K562 (cell line): ENCODE measurements at regions of chr12 and their contacts with region 1.

Region 1: GRCh38 chr12:23504043-23504442 is 445.4 kb downstream of the SOX5 start:
- DNase-seq: peak; percentile 27 to 63 (median 38)
- ATAC-seq: peak; percentile 93
- H3K4me3 ChIP-seq: no peak overlapping the region
- H3K27ac ChIP-seq: no peak overlapping the region
- H3K4me1 ChIP-seq: peaks cover 0 to 13% of the 10 kb centered on the region in 2 experiments; a peak in 3 of 5 replicates
- H3K27me3 ChIP-seq: no peaks in the 10 kb centered on the region
- CTCF ChIP-seq: peak; percentile 41 to 58 (median 48)
- EP300 ChIP-seq: no peak
- POLR2A ChIP-seq: no peak
- RAD21 ChIP-seq: peak; percentile 20 to 70; a peak in 2 of 4 replicates

Region 2: GRCh38 chr12:23204933-23205778 is 298.9 kb before region 1 on chr12:
- CTCF ChIA-PET with region 1: no interaction called
- POLR2A ChIA-PET with region 1: no interaction called
- in situ Hi-C with region 1: no loop called
- intact Hi-C with region 1: loop called (anchors 10 kb)
- DNase-seq: peak; percentile 56 to 68 (median 65)
- ATAC-seq: peak; percentile 84
- H3K4me3 ChIP-seq: no peak overlapping the region
- H3K27ac ChIP-seq: no peak overlapping the region
- H3K4me1 ChIP-seq: no peaks in the 10 kb centered on the region
- H3K27me3 ChIP-seq: no peaks in the 10 kb centered on the region
- CTCF ChIP-seq: peak; percentile 66 to 80 (median 75)
- EP300 ChIP-seq: no peak
- POLR2A ChIP-seq: no peak
- RAD21 ChIP-seq: peak; percentile 84 to 90

Region 3: GRCh38 chr12:23424685-23425084 is 79.4 kb before region 1 on chr12:
- CTCF ChIA-PET with region 1: no interaction called
- POLR2A ChIA-PET with region 1: no interaction called
- in situ Hi-C with region 1: no loop called
- intact Hi-C with region 1: loop called (anchors 5 kb)
- DNase-seq: peak in 2 of 4 experiments; percentile 17 to 57
- ATAC-seq: peak; percentile 66
- H3K4me3 ChIP-seq: no peak overlapping the region
- H3K27ac ChIP-seq: peak overlapping the region; percentile 84
- H3K4me1 ChIP-seq: peaks cover 0 to 21% of the 10 kb centered on the region in 2 experiments; a peak in 4 of 5 replicates
- H3K27me3 ChIP-seq: no peaks in the 10 kb centered on the region
- CTCF ChIP-seq: no peak
- EP300 ChIP-seq: no peak
- POLR2A ChIP-seq: no peak
- RAD21 ChIP-seq: no peak

Region 4: GRCh38 chr12:23555825-23556207 is 51.8 kb after region 1 on chr12:
- CTCF ChIA-PET with region 1: no interaction called
- POLR2A ChIA-PET with region 1: no interaction called
- in situ Hi-C with region 1: no loop called
- intact Hi-C with region 1: loop called (anchors 2 kb)
- DNase-seq: peak; percentile 29 to 80 (median 50)
- ATAC-seq: peak; percentile 72
- H3K4me3 ChIP-seq: peak overlapping the region; percentile 31
- H3K27ac ChIP-seq: peak overlapping the region; percentile 85
- H3K4me1 ChIP-seq: peaks cover 3 to 48% of the 10 kb centered on the region in 2 experiments; a peak in 3 of 5 replicates
- H3K27me3 ChIP-seq: no peaks in the 10 kb centered on the region
- CTCF ChIP-seq: no peak
- EP300 ChIP-seq: peak; percentile 83
- POLR2A ChIP-seq: no peak; the same call in 1 of the 2 replicates
- RAD21 ChIP-seq: no peak

Region 5: DNA sequence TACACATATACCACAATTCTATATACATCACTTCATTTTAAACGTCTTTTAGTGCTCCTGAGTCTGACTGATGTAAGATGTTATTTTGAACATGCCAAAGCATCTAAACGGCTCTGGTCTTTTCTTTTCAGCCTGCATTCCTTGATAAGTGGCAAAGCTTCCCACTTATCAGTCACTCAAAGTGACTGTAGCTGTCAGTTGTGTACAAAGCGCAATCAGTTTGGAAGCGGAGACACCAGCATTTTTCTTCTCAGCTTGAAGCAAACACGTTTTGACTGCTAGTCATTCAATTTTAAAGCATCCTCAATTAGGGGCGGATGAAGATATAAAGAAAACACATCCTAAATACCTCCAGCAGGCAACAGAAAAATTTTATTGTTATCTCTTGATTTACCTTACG is 218.6 kb after region 1 on chr12:
- CTCF ChIA-PET with region 1: no interaction called
- POLR2A ChIA-PET with region 1: no interaction called
- in situ Hi-C with region 1: no loop called
- intact Hi-C with region 1: no loop called
- DNase-seq: peak; percentile 40 to 91 (median 56)
- ATAC-seq: peak; percentile 75
- H3K4me3 ChIP-seq: peak overlapping the region; percentile 11
- H3K27ac ChIP-seq: peak overlapping the region; percentile 81
- H3K4me1 ChIP-seq: peaks cover 0 to 7% of the 10 kb centered on the region in 2 experiments; a peak in 2 of 5 replicates
- H3K27me3 ChIP-seq: no peaks in the 10 kb centered on the region
- CTCF ChIP-seq: no peak
- EP300 ChIP-seq: peak; percentile 96
- POLR2A ChIP-seq: peak; percentile 43; the same call in 1 of the 2 replicates
- RAD21 ChIP-seq: no peak; a peak in 1 of 4 replicates